ENCODE measurements at regions of chr9 and their contacts with region 1.

Region 1: GRCh38 chr9:79829566-79830302 is 258.0 kb downstream of the TLE4 start:
- DNase-seq: no peak
- ATAC-seq: no peak
- H3K4me3 ChIP-seq: no peak overlapping the region
- H3K27ac ChIP-seq: no peak overlapping the region
- H3K4me1 ChIP-seq: no peaks in the 10 kb centered on the region
- H3K27me3 ChIP-seq: no peaks in the 10 kb centered on the region
- CTCF ChIP-seq: no peak

Region 2: GRCh38 chr9:79847074-79847473 is 17.3 kb after region 1 on chr9:
- CTCF ChIA-PET with region 1: no interaction called
- POLR2A ChIA-PET with region 1: interaction called, 13 read pairs
- in situ Hi-C with region 1: no loop called
- intact Hi-C with region 1: no loop called
- DNase-seq: no peak
- ATAC-seq: no peak
- H3K4me3 ChIP-seq: no peak overlapping the region
- H3K27ac ChIP-seq: no peak overlapping the region
- H3K4me1 ChIP-seq: no peaks in the 10 kb centered on the region
- H3K27me3 ChIP-seq: no peaks in the 10 kb centered on the region
- CTCF ChIP-seq: no peak

Region 3: GRCh38 chr9:79868567-79869189 is 38.9 kb after region 1 on chr9:
- CTCF ChIA-PET with region 1: no interaction called
- POLR2A ChIA-PET with region 1: no interaction called
- in situ Hi-C with region 1: no loop called
- intact Hi-C with region 1: no loop called
- DNase-seq: no peak
- ATAC-seq: no peak
- H3K4me3 ChIP-seq: no peak overlapping the region
- H3K27ac ChIP-seq: no peak overlapping the region
- H3K4me1 ChIP-seq: no peaks in the 10 kb centered on the region
- H3K27me3 ChIP-seq: no peaks in the 10 kb centered on the region
- CTCF ChIP-seq: no peak

Region 4: DNA sequence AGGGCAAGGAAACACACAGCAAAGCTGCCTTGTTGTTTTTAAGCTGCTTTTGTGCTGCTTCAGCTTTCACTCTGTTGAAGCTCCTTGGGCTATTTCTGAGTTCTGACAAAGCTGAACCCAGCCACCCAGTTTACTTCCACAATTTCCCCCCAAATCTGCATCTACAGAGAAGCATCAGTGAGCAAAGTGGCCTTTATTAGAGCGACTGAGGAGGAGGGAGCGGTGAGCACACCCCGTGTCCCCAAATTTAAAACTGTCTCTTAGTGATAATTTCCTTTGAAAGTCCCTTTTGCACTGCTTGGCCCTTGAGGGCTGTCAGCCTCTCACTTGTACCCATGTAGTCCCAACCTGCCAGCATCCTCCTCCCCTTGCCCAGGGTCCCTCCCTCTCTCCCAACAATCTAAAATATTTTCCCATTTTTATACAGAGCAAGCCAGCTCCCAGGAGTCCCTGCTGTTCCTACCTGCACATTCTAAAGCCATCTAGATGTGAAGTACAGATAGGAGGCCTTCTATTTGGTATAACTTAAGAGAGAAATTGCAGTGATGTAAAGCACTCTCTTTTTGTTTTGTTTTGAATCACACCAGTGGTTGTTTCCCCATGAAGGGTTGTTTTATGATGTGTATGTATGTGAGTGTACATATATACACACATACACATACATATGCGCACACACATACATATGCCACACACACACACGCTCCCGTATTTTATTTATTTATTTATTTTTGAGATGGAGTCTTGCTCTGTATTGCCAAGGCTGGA is 55.5 kb after region 1 on chr9:
- CTCF ChIA-PET with region 1: no interaction called
- POLR2A ChIA-PET with region 1: no interaction called
- in situ Hi-C with region 1: no loop called
- intact Hi-C with region 1: no loop called
- DNase-seq: no peak
- ATAC-seq: no peak
- H3K4me3 ChIP-seq: no peak overlapping the region
- H3K27ac ChIP-seq: no peak overlapping the region
- H3K4me1 ChIP-seq: no peaks in the 10 kb centered on the region
- H3K27me3 ChIP-seq: no peaks in the 10 kb centered on the region
- CTCF ChIP-seq: no peak